Activated naive CD4-positive, alpha-beta T cell treated with anti-CD3 and anti-CD28 coated beads for 36 hours (primary cell): ENCODE measurements at regions of chr15 and their contacts with region 1.

Region 1: DNA sequence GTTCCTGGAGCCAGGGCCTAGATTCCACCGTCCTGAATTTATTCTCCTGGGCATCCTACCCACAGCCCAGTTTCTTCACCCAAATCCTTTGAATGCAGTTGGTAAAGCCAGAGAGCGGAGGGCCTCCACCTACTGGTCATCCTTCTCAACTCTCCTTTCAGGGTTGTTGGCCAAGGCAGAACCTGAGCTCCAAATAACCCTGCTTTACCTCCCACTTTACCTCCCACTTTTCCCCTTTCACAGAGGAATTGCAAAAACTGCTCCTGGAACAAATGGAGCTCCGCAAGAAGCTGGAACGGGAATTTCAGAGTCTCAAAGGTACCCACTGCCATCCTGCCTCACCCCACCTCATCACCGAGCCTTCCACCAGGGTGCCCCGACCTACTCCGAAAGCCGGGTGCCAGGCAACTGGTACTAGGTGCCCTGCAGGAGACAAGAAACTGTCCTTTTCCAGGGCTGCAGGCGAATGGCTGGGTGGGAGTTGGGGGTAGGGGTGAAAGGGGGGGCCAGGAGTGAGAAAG is 6.8 kb downstream of the SKOR1 start:
- DNase-seq: no peak
- H3K4me3 Mint-ChIP-seq: no peak overlapping the region
- H3K27ac Mint-ChIP-seq: no peak overlapping the region
- H3K4me1 Mint-ChIP-seq: peaks cover 45% of the 10 kb centered on the region
- H3K27me3 Mint-ChIP-seq: peaks cover 71% of the 10 kb centered on the region

Region 2: DNA sequence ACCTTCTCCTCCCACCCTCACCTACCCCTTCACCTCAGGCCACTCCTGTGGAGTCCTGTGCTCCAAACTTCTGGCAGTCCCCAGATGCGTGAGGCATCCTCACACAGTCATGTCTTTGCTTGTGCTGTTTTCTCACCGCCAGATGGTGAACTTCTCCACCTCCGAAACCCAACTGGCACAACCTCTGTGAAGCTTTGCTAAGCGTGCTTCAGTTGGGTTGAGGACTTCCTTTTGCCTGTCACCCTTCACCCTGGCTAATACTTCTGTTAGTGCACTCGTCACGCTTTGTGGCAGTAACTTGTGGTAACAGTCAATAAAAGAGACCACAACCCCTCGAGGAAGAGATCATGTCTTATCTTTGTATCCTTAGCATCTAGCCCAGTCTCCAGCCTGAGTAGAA is 48.8 kb before region 1 on chr15:
- CTCF ChIA-PET with region 1: interaction called, 6 read pairs
- intact Hi-C with region 1: loop called (anchors 1 kb)
- DNase-seq: peak; percentile 65
- H3K4me3 Mint-ChIP-seq: no peak overlapping the region
- H3K27ac Mint-ChIP-seq: no peak overlapping the region
- H3K4me1 Mint-ChIP-seq: peaks cover 15% of the 10 kb centered on the region
- H3K27me3 Mint-ChIP-seq: no peaks in the 10 kb centered on the region

Region 3: DNA sequence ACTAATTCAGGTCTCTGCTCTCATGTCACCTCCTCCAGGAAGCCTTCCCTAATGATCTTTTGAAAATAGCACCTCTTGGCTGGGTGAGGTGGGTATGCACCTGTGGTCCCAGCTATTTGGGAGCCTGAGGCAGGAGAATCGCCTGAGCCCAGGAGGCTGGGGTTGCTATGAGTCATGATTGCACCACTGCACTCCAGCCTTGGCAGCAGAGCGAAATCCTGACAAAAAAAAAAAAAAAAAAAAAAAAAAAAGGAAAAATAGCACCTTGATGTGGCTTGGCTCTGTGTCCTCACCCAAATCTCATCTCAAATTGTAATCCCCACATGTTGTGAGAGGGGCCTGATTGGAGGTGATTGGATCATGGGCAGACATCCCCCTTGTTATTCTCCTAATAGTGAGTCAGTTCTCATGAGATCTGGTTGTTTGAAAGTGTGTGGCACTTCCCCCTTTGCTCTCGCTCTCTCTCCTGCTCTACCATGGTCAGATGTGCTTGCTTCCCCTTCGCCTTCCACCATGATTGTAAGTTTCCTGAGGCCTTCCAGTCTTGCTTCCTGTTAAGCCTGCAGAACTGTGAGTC is 19.0 kb after region 1 on chr15:
- CTCF ChIA-PET with region 1: no interaction called
- intact Hi-C with region 1: no loop called
- DNase-seq: no peak
- H3K4me3 Mint-ChIP-seq: no peak overlapping the region
- H3K27ac Mint-ChIP-seq: no peak overlapping the region
- H3K4me1 Mint-ChIP-seq: peaks cover 8% of the 10 kb centered on the region
- H3K27me3 Mint-ChIP-seq: peaks cover 5% of the 10 kb centered on the region